BJ (cell line): ENCODE measurements at regions of chr3 and their contacts with region 1.

Region 1: DNA sequence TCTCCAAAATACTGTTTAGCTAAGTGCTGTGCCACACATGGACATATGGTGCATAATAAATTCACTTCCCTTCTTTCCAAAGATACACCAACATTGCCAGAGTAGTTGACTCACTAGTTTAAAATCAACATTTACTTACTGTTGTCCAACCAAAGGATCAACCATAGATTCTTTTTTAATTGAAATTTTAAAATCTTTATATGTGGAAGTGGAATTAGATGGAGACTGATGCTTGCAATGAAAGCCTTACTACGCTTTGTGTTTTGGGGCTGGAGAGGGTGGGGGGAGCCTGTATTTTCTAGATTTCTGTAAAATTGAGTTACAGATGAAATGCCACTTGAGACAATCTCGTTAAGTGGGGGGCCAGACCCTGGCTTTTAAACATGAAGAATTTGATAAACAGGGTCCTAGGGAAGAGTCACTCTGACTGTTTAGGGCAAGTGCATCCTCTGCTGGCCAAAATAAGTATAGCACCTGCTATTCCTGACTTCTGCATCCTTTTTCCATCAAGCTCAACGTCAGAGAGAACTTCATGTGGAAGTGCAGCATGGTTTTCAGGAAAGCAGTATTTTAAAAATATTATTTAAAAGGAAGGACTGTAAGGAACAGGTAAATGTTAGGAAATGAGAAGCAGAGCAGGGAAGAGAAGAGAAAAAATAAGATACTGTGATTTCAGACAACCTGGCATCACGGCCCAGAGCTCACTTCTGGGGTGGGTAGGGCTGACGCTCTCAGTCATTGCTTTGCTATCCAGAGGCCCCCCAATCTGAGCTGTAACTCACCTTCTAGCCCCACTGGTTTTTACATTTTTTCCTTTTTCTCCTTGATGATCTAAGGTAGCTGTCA is 76.7 kb downstream of the BOC start:
- DNase-seq: peak; percentile 15
- H3K4me3 ChIP-seq: no peak overlapping the region
- H3K27me3 ChIP-seq: no peaks in the 10 kb centered on the region
- CTCF ChIP-seq: peak; percentile 99

Region 2: GRCh38 chr3:113035387-113035982 is 252.5 kb before region 1 on chr3:
- CTCF ChIA-PET with region 1: interaction called, 32 read pairs
- POLR2A ChIA-PET with region 1: no interaction called
- DNase-seq: no peak
- H3K4me3 ChIP-seq: no peak overlapping the region
- H3K27me3 ChIP-seq: no peaks in the 10 kb centered on the region
- CTCF ChIP-seq: peak; percentile 93

Region 3: DNA sequence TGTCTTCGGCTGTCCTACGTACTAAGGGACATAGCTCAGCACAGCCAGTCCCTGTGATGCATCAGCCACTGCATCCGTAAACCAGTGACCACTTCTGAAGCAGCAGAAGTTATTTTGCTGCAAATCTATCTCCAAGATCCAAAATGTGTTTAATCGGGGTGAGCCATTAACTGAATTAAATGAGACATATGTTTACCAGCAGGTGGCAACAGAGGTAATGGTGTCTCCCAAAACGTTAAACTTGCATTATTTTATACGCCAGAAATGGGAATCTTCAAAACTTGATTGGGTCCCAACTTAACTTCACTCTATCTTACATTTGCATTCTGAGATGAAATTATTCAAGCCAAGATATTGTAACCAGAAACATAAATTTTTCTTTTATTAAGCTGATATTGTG is 152.0 kb before region 1 on chr3:
- CTCF ChIA-PET with region 1: interaction called, 59 read pairs
- POLR2A ChIA-PET with region 1: no interaction called
- DNase-seq: no peak
- H3K4me3 ChIP-seq: no peak overlapping the region
- H3K27me3 ChIP-seq: no peaks in the 10 kb centered on the region
- CTCF ChIP-seq: peak; percentile 44

Region 4: GRCh38 chr3:113211330-113212149 is 76.5 kb before region 1 on chr3 and contains the start of gene BOC:
- CTCF ChIA-PET with region 1: interaction called, 13 read pairs
- POLR2A ChIA-PET with region 1: no interaction called
- DNase-seq: no peak
- H3K4me3 ChIP-seq: peak within 1 kb of the TSS; percentile 81
- H3K27me3 ChIP-seq: no peaks in the 10 kb centered on the region
- CTCF ChIP-seq: no peak
- polyA plus RNA-seq, gene BOC: 11.3 and 17.7 TPM in 2 replicates

Region 5: DNA sequence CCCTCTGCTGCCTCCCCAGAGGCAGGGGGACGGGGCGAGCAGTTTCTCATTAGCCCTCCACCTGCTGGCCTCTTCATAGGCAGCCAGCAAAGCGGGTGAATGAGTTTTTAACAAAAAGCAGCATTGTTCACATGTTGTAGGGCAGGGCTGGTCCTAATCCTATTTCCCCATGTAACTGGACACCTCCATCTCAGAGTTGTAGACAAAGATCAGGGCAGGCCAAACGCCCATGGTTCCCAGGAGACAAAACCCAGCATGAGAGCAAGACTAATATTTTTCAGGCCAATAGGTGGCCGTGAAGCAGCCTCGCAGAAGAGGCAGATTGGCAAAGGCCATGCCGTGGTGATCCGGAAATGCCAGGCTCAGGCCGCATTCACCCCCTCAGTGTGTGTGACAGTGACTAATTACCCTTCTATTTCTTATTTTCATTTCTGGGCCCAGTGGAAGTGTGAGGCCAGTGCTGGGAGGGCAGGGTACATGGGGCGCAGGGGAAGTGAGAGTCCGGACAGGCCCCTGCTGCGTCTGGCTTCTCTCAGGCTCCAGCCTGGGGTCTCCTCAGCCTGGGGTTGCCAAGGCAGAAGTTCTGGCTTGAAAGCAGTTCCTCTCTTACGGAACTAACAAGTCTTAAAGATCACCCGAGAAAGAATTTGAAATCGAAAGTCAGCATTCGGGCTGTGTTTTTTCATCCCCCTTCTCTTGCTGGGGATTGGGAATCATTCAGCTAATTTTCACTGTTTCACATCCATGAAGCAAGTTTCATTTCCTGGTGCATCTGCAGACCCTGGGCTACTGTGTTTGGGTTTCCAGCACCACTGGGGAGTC is 11.9 kb before region 1 on chr3:
- CTCF ChIA-PET with region 1: interaction called, 10 read pairs
- POLR2A ChIA-PET with region 1: no interaction called
- DNase-seq: no peak
- H3K4me3 ChIP-seq: no peak overlapping the region
- H3K27me3 ChIP-seq: no peaks in the 10 kb centered on the region
- CTCF ChIP-seq: peak; percentile 10; the same call in 1 of the 2 replicates

Region 6: DNA sequence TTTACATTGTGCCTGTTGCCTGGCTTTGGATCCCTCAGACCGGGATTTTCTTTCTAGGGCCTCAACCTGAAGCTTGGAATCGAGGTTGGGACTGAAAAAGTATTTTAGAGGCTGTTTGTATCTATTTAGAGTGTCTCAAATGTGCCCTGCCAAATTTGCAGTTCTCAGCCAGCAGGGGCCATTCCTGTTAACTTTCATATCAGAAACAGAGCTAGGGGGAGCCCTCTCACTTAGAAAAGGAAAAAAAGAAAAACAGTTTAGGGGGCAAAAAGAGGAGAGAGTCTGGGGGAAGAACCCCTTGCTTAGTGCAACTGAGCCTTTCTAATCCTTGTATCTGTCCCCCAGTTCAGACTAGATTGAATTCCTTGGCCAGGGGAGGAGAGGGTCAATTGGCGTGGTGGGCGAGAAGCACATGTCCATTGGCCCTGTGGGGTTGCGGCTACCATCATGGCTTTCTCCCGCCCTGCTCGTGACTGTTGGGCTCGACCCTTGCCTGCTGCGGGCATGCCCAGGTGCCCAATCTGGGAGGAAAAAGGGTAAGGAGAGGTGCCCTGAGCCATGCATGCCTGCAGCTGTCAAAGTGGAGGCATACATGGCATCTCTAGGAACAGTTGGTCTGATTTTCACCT is 51.7 kb after region 1 on chr3:
- CTCF ChIA-PET with region 1: no interaction called
- POLR2A ChIA-PET with region 1: no interaction called
- DNase-seq: no peak
- H3K4me3 ChIP-seq: no peak overlapping the region
- H3K27me3 ChIP-seq: no peaks in the 10 kb centered on the region
- CTCF ChIP-seq: no peak; the same call in 1 of the 2 replicates